ENCODE measurements at regions of chr1 and their contacts with region 1.

Region 1: DNA sequence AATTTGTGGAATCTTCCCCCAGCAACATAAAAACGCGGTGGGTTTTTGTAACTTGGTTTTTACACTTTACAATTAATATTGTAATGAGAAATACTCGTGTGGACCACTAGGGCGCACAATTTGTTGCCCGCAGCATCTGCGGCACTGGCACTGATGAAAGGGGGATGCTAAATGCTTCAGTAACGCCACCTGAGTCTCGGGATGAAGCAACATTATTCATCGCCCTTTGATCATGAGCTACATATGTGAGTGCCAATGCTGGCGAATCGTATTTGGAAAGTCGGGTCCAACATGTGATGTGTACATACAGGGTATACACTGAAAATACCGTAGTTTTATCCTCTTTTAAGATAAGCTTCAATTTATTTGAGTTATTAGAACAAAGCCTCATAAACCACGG is 34.2 kb upstream of the COX20 start:
- DNase-seq: peak in 8 of 9 experiments; percentile 32 to 81 (median 66)
- ATAC-seq: peak; percentile 96
- H3K4me3 ChIP-seq: no peak overlapping the region
- H3K4me3 Mint-ChIP-seq: no peak overlapping the region
- H3K27ac ChIP-seq: no peak overlapping the region
- H3K27ac Mint-ChIP-seq: no peak overlapping the region
- H3K4me1 ChIP-seq: no peaks in the 10 kb centered on the region
- H3K4me1 Mint-ChIP-seq: peaks cover 4% of the 10 kb centered on the region
- H3K27me3 ChIP-seq: peaks cover 0 to 4% of the 10 kb centered on the region in 2 experiments
- H3K27me3 Mint-ChIP-seq: peaks cover 12% of the 10 kb centered on the region
- CTCF ChIP-seq: peak; percentile 75

Region 2: GRCh38 chr1:244599937-244600350 is 201.3 kb before region 1 on chr1:
- CTCF ChIA-PET with region 1: interaction called, 148 read pairs
- POLR2A ChIA-PET with region 1: interaction called, 4 read pairs
- intact Hi-C with region 1: loop called (anchors 1 kb)
- DNase-seq: peak in 5 of 9 experiments; percentile 6 to 38 (median 24)
- ATAC-seq: peak; percentile 87
- H3K4me3 ChIP-seq: no peak overlapping the region
- H3K4me3 Mint-ChIP-seq: no peak overlapping the region
- H3K27ac ChIP-seq: no peak overlapping the region
- H3K27ac Mint-ChIP-seq: no peak overlapping the region
- H3K4me1 ChIP-seq: no peaks in the 10 kb centered on the region
- H3K4me1 Mint-ChIP-seq: no peaks in the 10 kb centered on the region
- H3K27me3 ChIP-seq: no peaks in the 10 kb centered on the region
- H3K27me3 Mint-ChIP-seq: no peaks in the 10 kb centered on the region
- CTCF ChIP-seq: no peak

Region 3: GRCh38 chr1:244652699-244653466 is 148.4 kb before region 1 on chr1 and contains the start of gene DESI2:
- CTCF ChIA-PET with region 1: no interaction called
- POLR2A ChIA-PET with region 1: no interaction called
- intact Hi-C with region 1: loop called in 1 of 2 experiments (anchors 5 kb)
- DNase-seq: peak; percentile 95 to 100 (median 97)
- ATAC-seq: peak; percentile 92
- H3K4me3 ChIP-seq: peak within 1 kb of the TSS; percentile 67 to 95
- H3K4me3 Mint-ChIP-seq: no peak within 1 kb of the TSS
- H3K27ac ChIP-seq: peak within 1 kb of the TSS; percentile 68 to 73
- H3K27ac Mint-ChIP-seq: peak within 1 kb of the TSS; percentile 86
- H3K4me1 ChIP-seq: peaks cover 22% of the 10 kb centered on the region
- H3K4me1 Mint-ChIP-seq: peaks cover 26% of the 10 kb centered on the region
- H3K27me3 ChIP-seq: no peaks in the 10 kb centered on the region
- H3K27me3 Mint-ChIP-seq: no peaks in the 10 kb centered on the region
- CTCF ChIP-seq: peak; percentile 39
- total RNA-seq, gene DESI2: 14.5 to 16.2 TPM

Region 4: DNA sequence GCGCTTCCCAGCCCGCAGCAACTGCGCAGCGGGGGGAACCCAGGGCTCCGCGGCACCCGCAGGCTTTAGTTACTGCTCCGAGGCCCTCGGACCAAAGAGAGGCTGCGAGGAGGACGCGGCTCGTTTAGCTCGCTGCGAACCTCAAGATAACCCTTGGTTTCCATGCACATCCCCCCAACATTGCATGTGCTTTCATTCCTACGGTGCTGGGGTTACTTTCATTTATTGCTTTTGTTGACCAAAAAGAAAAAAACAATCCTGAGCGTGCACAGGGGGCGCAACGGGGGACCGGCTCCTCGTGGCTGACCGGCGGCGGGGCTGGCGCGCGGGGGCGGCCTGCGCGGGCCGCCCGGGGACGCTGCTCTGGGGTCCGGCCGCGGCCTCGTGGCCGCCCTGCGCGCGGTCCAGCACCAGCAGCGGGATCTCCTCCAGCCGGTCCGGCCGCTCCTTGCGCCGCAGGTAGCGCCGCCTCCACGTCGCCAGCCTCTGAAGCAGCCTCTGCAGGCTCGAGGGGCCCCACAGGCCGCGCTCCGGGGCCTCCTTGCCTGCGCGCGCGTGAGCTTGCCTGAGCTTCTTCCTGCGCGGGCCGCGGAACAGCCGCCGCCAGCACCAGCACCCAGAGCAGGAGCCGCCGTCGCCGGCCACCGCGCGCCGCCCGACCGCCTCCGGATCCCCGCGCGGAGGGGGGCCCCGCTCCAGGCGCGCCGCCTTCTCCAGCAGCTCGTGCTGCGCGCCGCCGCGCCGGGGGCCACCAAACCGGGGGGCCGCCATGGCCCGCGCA is 70.9 kb before region 1 on chr1:
- CTCF ChIA-PET with region 1: no interaction called
- POLR2A ChIA-PET with region 1: no interaction called
- intact Hi-C with region 1: no loop called
- DNase-seq: peak in 5 of 9 experiments; percentile 5 to 58 (median 42)
- ATAC-seq: peak; percentile 59
- H3K4me3 ChIP-seq: peak overlapping the region; percentile 53 to 62
- H3K4me3 Mint-ChIP-seq: peak overlapping the region; percentile 89
- H3K27ac ChIP-seq: no peak overlapping the region
- H3K27ac Mint-ChIP-seq: no peak overlapping the region
- H3K4me1 ChIP-seq: peaks cover 6% of the 10 kb centered on the region
- H3K4me1 Mint-ChIP-seq: peaks cover 8% of the 10 kb centered on the region
- H3K27me3 ChIP-seq: no peaks in the 10 kb centered on the region
- H3K27me3 Mint-ChIP-seq: peaks cover 12% of the 10 kb centered on the region
- CTCF ChIP-seq: no peak

Region 5: DNA sequence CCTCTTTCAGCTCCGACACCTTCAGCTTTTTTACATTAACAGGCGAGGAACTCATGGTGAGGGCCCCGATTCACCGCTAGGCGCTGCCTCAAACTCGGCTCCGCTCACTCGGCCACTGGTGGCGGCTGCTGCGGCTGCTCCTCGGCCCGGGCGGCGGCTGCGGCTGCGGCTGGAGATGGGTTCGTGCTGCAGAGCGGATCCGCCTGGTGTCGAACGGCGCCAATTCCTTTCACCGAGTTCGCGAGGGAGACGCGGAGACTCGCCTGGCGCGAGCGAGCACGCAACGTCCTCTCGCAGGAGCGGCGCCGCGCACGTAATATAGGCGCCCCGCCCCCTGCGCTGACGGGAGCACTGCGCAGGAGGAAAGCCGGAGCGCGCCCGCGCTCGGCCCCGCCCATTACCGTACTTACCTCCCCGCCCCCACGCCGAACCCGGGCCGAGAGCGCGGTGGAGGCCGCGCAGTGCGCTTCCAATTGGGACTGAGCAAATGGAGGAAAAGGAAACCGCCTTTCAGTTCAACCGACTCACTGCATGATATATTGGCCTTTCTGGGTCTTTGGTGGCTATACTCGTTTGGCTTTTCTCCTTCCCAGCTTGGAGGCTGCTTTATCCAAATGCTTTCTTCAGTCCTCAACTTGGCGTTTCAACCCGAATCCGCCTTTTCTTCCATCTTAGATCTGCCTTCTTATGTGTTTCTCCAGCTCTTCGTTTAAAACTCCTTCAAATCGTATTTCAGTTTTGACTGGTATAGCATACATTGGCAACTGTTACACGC is 63.2 kb after region 1 on chr1 and contains the start of gene HNRNPU:
- CTCF ChIA-PET with region 1: interaction called, 8 read pairs
- POLR2A ChIA-PET with region 1: interaction called, 4 read pairs
- intact Hi-C with region 1: loop called in 1 of 2 experiments (anchors 2 kb)
- DNase-seq: peak; percentile 91 to 99 (median 96)
- ATAC-seq: peak; percentile 63
- H3K4me3 ChIP-seq: peak within 1 kb of the TSS; percentile 85 to 88
- H3K4me3 Mint-ChIP-seq: peak within 1 kb of the TSS; percentile 94
- H3K27ac ChIP-seq: peak within 1 kb of the TSS; percentile 91 to 94
- H3K27ac Mint-ChIP-seq: peak within 1 kb of the TSS; percentile 98
- H3K4me1 ChIP-seq: peaks cover 34% of the 10 kb centered on the region
- H3K4me1 Mint-ChIP-seq: peaks cover 45% of the 10 kb centered on the region
- H3K27me3 ChIP-seq: no peaks in the 10 kb centered on the region
- H3K27me3 Mint-ChIP-seq: no peaks in the 10 kb centered on the region
- CTCF ChIP-seq: no peak
- total RNA-seq, gene HNRNPU: 411 to 415 TPM

Region 6: GRCh38 chr1:244970661-244971551 is 169.7 kb after region 1 on chr1:
- CTCF ChIA-PET with region 1: interaction called, 4 read pairs
- POLR2A ChIA-PET with region 1: interaction called, 3 read pairs
- intact Hi-C with region 1: loop called in 1 of 2 experiments (anchors 1 kb)
- DNase-seq: peak; percentile 86 to 97 (median 93)
- ATAC-seq: peak; percentile 80
- H3K4me3 ChIP-seq: peak overlapping the region; percentile 68 to 70
- H3K4me3 Mint-ChIP-seq: peak overlapping the region; percentile 97
- H3K27ac ChIP-seq: peak overlapping the region; percentile 99 to 100
- H3K27ac Mint-ChIP-seq: peak overlapping the region; percentile 98
- H3K4me1 ChIP-seq: peaks cover 5% of the 10 kb centered on the region
- H3K4me1 Mint-ChIP-seq: peaks cover 19% of the 10 kb centered on the region
- H3K27me3 ChIP-seq: no peaks in the 10 kb centered on the region
- H3K27me3 Mint-ChIP-seq: no peaks in the 10 kb centered on the region
- CTCF ChIP-seq: peak; percentile 54

Region 7: DNA sequence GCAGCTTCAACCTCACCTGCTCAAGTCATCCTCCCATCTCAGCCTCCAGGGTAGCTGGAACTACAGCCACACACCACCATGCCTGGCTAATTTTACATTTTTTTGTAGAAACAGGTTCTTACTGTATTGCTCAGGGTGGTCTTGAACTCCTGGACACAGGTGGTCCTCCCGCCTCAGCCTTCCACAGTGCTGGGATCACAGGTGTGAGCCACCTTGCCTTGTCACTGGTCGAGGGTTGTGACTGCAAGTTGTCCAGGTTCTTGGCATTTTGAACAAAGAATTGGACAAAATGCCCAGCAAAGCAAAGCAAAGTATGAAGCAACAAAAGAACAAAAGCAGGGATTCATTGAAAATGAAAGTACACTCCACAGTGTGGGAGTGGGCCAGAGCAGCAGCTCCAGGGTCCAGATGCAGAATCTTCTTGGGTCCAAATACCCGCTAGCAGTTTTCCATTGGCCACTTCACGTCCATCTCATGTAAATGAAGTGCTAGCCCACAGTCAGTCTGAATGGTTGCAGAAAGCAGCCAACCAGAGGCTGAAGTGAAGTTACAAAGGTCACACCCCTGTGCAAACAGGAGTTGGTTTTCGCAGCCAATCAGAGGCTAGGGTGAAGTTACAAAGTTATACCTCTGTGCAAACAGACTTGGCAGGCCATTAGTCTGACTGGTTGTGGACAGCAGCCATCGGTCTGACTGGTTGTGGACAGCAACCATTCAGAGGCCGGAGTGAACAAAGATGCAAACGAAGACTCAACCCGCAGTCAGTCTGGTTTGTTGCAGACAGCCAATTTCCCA is 244.0 kb after region 1 on chr1:
- CTCF ChIA-PET with region 1: interaction called, 180 read pairs
- POLR2A ChIA-PET with region 1: interaction called, 3 read pairs
- intact Hi-C with region 1: loop called (anchors 1 kb)
- DNase-seq: no peak
- ATAC-seq: no peak
- H3K4me3 ChIP-seq: no peak overlapping the region
- H3K4me3 Mint-ChIP-seq: no peak overlapping the region
- H3K27ac ChIP-seq: no peak overlapping the region
- H3K27ac Mint-ChIP-seq: no peak overlapping the region
- H3K4me1 ChIP-seq: no peaks in the 10 kb centered on the region
- H3K4me1 Mint-ChIP-seq: peaks cover 2% of the 10 kb centered on the region
- H3K27me3 ChIP-seq: no peaks in the 10 kb centered on the region
- H3K27me3 Mint-ChIP-seq: no peaks in the 10 kb centered on the region
- CTCF ChIP-seq: no peak

Region 8: GRCh38 chr1:246002725-246003441 is 1201.6 kb after region 1 on chr1:
- CTCF ChIA-PET with region 1: no interaction called
- POLR2A ChIA-PET with region 1: no interaction called
- intact Hi-C with region 1: loop called in 1 of 2 experiments (anchors 10 kb)
- DNase-seq: peak; percentile 68 to 90 (median 81)
- ATAC-seq: peak; percentile 51
- H3K4me3 ChIP-seq: no peak overlapping the region
- H3K4me3 Mint-ChIP-seq: no peak overlapping the region
- H3K27ac ChIP-seq: no peak overlapping the region
- H3K27ac Mint-ChIP-seq: no peak overlapping the region
- H3K4me1 ChIP-seq: no peaks in the 10 kb centered on the region
- H3K4me1 Mint-ChIP-seq: no peaks in the 10 kb centered on the region
- H3K27me3 ChIP-seq: no peaks in the 10 kb centered on the region
- H3K27me3 Mint-ChIP-seq: no peaks in the 10 kb centered on the region
- CTCF ChIP-seq: peak; percentile 87